A549 (cell line): ENCODE measurements at regions of chr15 and their contacts with region 1.

Region 1: DNA sequence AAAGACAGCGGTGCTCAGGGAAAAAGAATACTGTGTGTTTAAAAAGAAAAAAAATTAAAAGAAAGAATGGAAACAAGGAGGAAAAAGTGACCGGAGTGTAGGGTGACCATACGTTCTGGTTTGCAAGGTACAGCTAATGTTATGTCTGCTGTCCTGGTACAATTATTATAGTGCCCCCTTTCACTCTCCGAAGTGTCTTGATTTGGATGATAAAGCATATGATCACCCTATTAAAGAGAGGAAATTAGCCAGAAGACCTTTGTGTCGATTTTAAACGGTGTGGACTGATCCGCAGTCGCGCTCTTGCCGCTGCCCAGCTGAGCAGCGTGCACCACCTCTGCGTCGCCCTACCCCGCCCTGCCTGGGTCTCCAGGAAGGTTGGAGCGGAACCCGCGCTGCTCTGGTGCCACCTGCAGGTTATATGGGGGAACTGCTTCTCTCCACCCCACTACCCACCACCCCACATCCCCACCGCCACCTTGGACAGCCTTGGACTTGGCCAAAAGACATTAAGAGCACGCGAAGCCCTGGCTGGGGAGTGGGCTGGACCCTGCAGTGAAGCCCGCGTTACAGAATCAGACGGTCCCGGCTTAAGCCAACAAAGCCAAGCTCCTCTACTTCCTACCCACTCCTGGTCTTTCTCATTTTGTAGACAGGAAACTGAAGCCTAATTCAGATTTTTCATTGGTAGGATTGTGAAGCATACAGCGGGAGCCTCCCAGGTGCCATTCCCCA is 41.2 kb upstream of the UBE2Q2 start:
- DNase-seq: peak; percentile 73 to 96
- ATAC-seq: peak; percentile 99 to 100
- H3K4me3 ChIP-seq: peak overlapping the region; percentile 34
- H3K27ac ChIP-seq: peak overlapping the region; percentile 16 to 66; a peak in 3 of 6 replicates
- H3K4me1 ChIP-seq: peaks cover 4% of the 10 kb centered on the region; the same call in 1 of the 3 replicates
- CTCF ChIP-seq: peak; percentile 98
- EP300 ChIP-seq: no peak
- POLR2A ChIP-seq: no peak
- RAD21 ChIP-seq: peak; percentile 94 to 99

Region 2: DNA sequence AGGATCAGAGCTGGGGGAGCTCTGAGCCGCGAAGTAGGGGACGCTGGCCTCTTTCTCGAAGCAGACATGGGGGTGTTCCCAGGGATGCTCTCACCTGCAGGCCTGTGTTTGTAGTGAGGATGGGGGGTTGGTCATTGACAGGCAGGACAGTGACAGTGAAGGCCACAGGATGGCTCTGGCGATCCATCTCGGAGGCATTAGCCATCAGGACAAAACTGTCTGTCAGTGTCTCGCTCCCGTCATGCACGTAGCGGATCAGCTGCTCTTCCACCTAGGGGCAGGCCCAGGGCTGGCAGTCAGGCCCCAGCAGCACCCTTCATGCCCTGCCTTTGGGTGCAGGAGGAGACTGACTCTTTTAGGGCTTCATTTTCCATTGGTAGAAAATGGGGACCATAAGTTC is 117.4 kb before region 1 on chr15:
- CTCF ChIA-PET with region 1: interaction called, 130 read pairs
- POLR2A ChIA-PET with region 1: no interaction called
- DNase-seq: peak in 1 of 2 experiments; percentile 47
- ATAC-seq: no peak
- H3K4me3 ChIP-seq: no peak overlapping the region
- H3K27ac ChIP-seq: no peak overlapping the region
- H3K4me1 ChIP-seq: no peaks in the 10 kb centered on the region
- CTCF ChIP-seq: no peak
- EP300 ChIP-seq: no peak
- POLR2A ChIP-seq: no peak
- RAD21 ChIP-seq: peak in 1 of 2 experiments; percentile 25; a peak in 1 of 5 replicates

Region 3: GRCh38 chr15:75745305-75745704 is 56.7 kb before region 1 on chr15:
- CTCF ChIA-PET with region 1: interaction called, 350 read pairs
- POLR2A ChIA-PET with region 1: no interaction called
- DNase-seq: no peak
- ATAC-seq: no peak
- H3K4me3 ChIP-seq: no peak overlapping the region
- H3K27ac ChIP-seq: no peak overlapping the region
- H3K4me1 ChIP-seq: peaks cover 5% of the 10 kb centered on the region; the same call in 1 of the 3 replicates
- CTCF ChIP-seq: no peak
- EP300 ChIP-seq: no peak
- POLR2A ChIP-seq: no peak
- RAD21 ChIP-seq: no peak

Region 4: GRCh38 chr15:75770131-75770530 is 31.9 kb before region 1 on chr15:
- CTCF ChIA-PET with region 1: interaction called, 23 read pairs
- POLR2A ChIA-PET with region 1: no interaction called
- DNase-seq: no peak
- ATAC-seq: no peak
- H3K4me3 ChIP-seq: no peak overlapping the region
- H3K27ac ChIP-seq: peak overlapping the region in 1 of 2 experiments; percentile 30; a peak in 3 of 6 replicates
- H3K4me1 ChIP-seq: peaks cover 16% of the 10 kb centered on the region
- CTCF ChIP-seq: no peak
- EP300 ChIP-seq: no peak
- POLR2A ChIP-seq: no peak
- RAD21 ChIP-seq: no peak

Region 5: DNA sequence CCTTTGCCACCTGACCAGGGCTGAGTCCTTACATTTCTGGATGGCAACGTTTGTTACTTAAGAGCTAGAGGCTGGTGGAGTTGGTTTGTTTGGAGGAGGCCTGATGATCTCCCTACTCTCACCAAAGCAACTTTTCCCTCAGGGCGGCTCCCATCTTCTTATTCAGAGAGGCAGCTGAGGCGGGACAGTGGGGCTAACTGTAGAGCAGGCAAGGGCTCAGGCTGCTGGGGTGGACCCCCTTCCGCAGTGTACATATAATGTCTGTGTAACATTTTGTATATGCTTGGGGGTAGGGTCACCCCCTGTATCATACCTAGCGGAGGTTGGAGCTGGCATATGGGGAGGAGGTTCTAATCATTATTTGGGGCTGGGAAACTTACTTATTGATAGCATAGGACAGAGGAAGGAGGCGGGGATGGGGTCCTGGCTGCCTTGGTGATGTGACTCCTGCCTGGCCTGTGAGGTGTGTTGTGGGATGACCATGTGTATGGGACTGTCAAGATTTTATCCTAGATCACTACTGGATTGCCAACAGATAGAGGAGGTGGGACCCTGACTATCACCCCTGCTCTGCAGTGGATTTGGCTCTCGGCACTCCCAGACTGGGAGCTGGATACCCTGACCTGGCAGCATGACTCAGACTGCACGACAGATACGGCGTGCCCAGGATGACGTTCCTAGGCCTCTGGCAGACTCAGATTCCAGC is 11.2 kb before region 1 on chr15:
- CTCF ChIA-PET with region 1: interaction called, 36 read pairs
- POLR2A ChIA-PET with region 1: no interaction called
- DNase-seq: no peak
- ATAC-seq: no peak; a peak in 1 of 6 replicates
- H3K4me3 ChIP-seq: no peak overlapping the region
- H3K27ac ChIP-seq: no peak overlapping the region
- H3K4me1 ChIP-seq: no peaks in the 10 kb centered on the region
- CTCF ChIP-seq: no peak
- EP300 ChIP-seq: no peak
- POLR2A ChIP-seq: no peak
- RAD21 ChIP-seq: no peak

Region 6: GRCh38 chr15:75842722-75843551 is 40.9 kb after region 1 on chr15 and contains the start of gene UBE2Q2:
- CTCF ChIA-PET with region 1: interaction called, 18 read pairs
- POLR2A ChIA-PET with region 1: no interaction called
- DNase-seq: peak; percentile 88 to 93
- ATAC-seq: peak; percentile 77 to 80
- H3K4me3 ChIP-seq: peak within 1 kb of the TSS; percentile 66
- H3K27ac ChIP-seq: peak within 1 kb of the TSS; percentile 88 to 92
- H3K4me1 ChIP-seq: peaks cover 21% of the 10 kb centered on the region
- CTCF ChIP-seq: no peak; the same call in 2 of the 3 replicates
- EP300 ChIP-seq: no peak
- POLR2A ChIP-seq: peak; percentile 78
- RAD21 ChIP-seq: no peak
- polyA plus RNA-seq, gene UBE2Q2: 41.2 and 50.6 TPM in 2 replicates

Region 7: DNA sequence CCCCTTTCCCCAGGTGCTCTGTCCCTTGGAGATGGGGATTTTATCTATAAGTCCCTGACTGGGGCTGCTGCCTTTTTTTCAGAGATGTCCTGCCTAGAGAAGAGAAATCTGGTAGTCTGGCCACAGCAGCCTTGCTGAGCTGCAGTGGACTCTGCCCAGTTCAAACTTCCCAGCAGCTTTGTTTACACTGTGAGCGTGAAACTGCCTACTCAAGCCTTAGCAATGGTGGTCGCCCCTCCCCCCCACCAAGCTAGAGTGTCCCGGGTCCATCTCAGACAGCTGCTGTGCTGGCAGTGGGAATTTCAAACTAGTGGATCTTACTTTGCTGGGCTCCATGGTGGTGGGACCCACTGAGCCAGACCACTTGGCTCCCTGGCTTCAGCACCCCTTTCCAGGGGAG is 296.7 kb after region 1 on chr15:
- CTCF ChIA-PET with region 1: no interaction called
- POLR2A ChIA-PET with region 1: no interaction called
- DNase-seq: no peak
- ATAC-seq: no peak
- H3K4me3 ChIP-seq: no peak overlapping the region
- H3K27ac ChIP-seq: no peak overlapping the region
- H3K4me1 ChIP-seq: no peaks in the 10 kb centered on the region
- CTCF ChIP-seq: no peak
- EP300 ChIP-seq: no peak
- POLR2A ChIP-seq: no peak
- RAD21 ChIP-seq: no peak